Common myeloid progenitor, CD34-positive (primary cell): ENCODE measurements at regions of chr3 and their contacts with region 1.

Region 1: GRCh38 chr3:44501971-44502370 is 24.5 kb upstream of the ZNF445 start:
- DNase-seq: no peak
- H3K4me3 ChIP-seq: no peak overlapping the region
- H3K27ac ChIP-seq: no peak overlapping the region
- H3K4me1 ChIP-seq: no peaks in the 10 kb centered on the region
- H3K27me3 ChIP-seq: no peaks in the 10 kb centered on the region

Region 2: GRCh38 chr3:44400771-44401170 is 101.2 kb before region 1 on chr3:
- CTCF ChIA-PET with region 1: no interaction called
- POLR2A ChIA-PET with region 1: no interaction called
- DNase-seq: no peak
- H3K4me3 ChIP-seq: no peak overlapping the region
- H3K27ac ChIP-seq: no peak overlapping the region
- H3K4me1 ChIP-seq: no peaks in the 10 kb centered on the region
- H3K27me3 ChIP-seq: no peaks in the 10 kb centered on the region

Region 3: GRCh38 chr3:44411031-44411645 is 90.8 kb before region 1 on chr3:
- CTCF ChIA-PET with region 1: no interaction called
- POLR2A ChIA-PET with region 1: no interaction called
- DNase-seq: no peak
- H3K4me3 ChIP-seq: no peak overlapping the region
- H3K27ac ChIP-seq: no peak overlapping the region
- H3K4me1 ChIP-seq: peaks cover 0 to 2% (median 1%) of the 10 kb centered on the region in 4 experiments
- H3K27me3 ChIP-seq: no peaks in the 10 kb centered on the region

Region 4: GRCh38 chr3:44482725-44483124 is 19.2 kb before region 1 on chr3:
- CTCF ChIA-PET with region 1: interaction called, 10 read pairs
- POLR2A ChIA-PET with region 1: interaction called, 3 read pairs
- DNase-seq: no peak
- H3K4me3 ChIP-seq: no peak overlapping the region
- H3K27ac ChIP-seq: no peak overlapping the region
- H3K4me1 ChIP-seq: peaks cover 0 to 6% (median 5%) of the 10 kb centered on the region in 4 experiments
- H3K27me3 ChIP-seq: no peaks in the 10 kb centered on the region

Region 5: GRCh38 chr3:44981220-44981619 is 479.2 kb after region 1 on chr3:
- CTCF ChIA-PET with region 1: no interaction called
- POLR2A ChIA-PET with region 1: no interaction called
- DNase-seq: peak in 1 of 3 donors; percentile 22
- H3K4me3 ChIP-seq: no peak overlapping the region
- H3K27ac ChIP-seq: no peak overlapping the region
- H3K4me1 ChIP-seq: peaks cover 13 to 44% (median 29%) of the 10 kb centered on the region in 4 experiments
- H3K27me3 ChIP-seq: no peaks in the 10 kb centered on the region